Naive thymus-derived CD4-positive, alpha-beta T cell (primary cell): ENCODE measurements at regions of chr14 and their contacts with region 1.

Region 1: DNA sequence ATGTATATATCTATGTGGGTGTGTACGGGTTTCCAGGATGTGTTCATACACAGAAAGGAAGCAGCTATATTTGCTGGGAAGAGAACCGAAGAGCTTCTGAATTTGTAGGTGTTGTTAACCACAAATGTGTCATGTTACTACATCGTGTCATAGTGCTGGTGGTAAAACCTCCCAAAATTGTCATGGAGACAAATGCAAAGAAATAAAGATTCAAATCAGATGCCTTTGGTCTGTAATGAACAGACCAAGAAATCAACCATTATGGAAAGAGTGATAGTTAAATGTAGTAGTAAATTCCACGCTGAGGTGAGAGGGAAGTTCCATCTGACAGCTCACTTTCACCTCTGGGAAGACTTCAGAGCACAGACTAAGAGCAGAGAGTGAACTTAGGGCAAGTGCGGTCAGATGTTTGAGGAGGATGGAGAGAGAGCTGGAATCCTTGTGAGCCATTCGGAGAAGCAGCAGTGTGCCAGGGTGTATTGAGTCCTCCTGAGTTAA is 487.5 kb downstream of the TMEM121 start:
- DNase-seq: peak in 4 of 9 donors; percentile 40 to 60 (median 54)
- ATAC-seq: peak; percentile 88
- H3K4me3 ChIP-seq: no peak overlapping the region
- H3K4me3 Mint-ChIP-seq: peak overlapping the region in 3 of 10 donors; percentile 16 to 65 (median 20)
- H3K27ac ChIP-seq: peak overlapping the region; percentile 48
- H3K27ac Mint-ChIP-seq: peak overlapping the region; percentile 64 to 93 (median 84)
- H3K4me1 ChIP-seq: peaks cover 0 to 7% of the 10 kb centered on the region in 2 donors
- H3K4me1 Mint-ChIP-seq: peaks cover 14 to 53% (median 20%) of the 10 kb centered on the region in 7 donors
- H3K27me3 ChIP-seq: no peaks in the 10 kb centered on the region
- H3K27me3 Mint-ChIP-seq: peaks cover 0 to 2% (median 0%) of the 10 kb centered on the region in 5 donors

Region 2: DNA sequence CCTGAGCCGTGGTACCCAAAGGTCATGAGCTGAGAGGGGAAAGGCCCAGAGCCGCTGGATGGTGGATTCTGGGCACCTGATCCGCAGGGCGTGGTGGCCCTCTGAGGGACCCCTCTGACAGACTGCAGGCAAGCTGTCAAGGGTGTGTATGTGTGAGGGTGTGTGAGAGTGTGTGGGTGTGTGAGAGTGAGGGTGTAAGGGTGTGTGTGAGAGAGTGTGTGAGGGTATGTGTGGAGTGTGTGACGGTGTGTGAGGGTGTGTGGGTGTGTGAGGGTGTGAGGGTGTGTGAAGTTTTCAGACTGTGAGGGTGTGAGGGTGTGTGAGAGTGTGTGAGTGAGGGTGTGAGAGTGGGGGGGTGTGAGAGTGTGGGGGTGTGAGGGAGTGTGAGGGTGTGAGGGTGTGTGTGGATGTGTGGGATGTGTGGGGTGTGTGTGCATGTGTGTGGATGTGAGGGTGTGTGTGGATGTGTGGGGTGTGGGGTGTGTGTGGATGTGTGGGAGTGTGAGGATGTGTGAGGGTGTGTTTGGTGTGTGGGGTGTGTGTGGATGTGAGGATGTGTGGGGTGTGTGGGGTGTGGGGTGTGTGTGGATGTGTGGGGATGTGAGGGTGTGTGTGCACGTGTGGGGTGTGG is 330.9 kb before region 1 on chr14:
- CTCF ChIA-PET with region 1: no interaction called
- POLR2A ChIA-PET with region 1: no interaction called
- intact Hi-C with region 1: loop called in 1 of 2 experiments (anchors 10 kb)
- DNase-seq: no peak
- ATAC-seq: no peak
- H3K4me3 ChIP-seq: no peak overlapping the region
- H3K4me3 Mint-ChIP-seq: peak overlapping the region in 1 of 10 donors; percentile 34
- H3K27ac ChIP-seq: no peak overlapping the region
- H3K27ac Mint-ChIP-seq: peak overlapping the region in 3 of 9 donors; percentile 22 to 79 (median 63)
- H3K4me1 ChIP-seq: no peaks in the 10 kb centered on the region
- H3K4me1 Mint-ChIP-seq: peaks cover 0 to 7% (median 0%) of the 10 kb centered on the region in 7 donors
- H3K27me3 ChIP-seq: no peaks in the 10 kb centered on the region
- H3K27me3 Mint-ChIP-seq: peaks cover 0 to 3% (median 0%) of the 10 kb centered on the region in 5 donors

Region 3: DNA sequence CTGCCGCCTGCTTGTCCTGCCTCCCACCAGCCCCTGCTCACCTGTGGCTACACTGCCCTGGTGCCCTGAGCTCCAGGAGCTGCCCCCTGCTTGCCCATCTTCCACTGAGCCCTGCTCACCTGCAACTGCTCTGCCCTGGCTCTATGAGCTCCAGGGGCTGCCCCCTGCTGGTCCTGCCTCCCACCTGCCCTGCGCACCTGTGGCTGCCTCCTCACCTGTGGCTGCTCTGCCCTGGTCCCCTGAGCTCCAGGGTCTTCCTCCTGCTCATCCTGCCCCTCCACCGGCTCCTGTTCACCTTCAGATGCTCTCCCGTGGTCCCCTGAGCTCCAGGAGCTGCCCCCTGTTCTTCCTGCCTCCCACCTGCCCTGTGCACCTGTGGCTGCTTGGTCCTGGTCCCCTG is 239.9 kb before region 1 on chr14:
- CTCF ChIA-PET with region 1: no interaction called
- POLR2A ChIA-PET with region 1: no interaction called
- intact Hi-C with region 1: no loop called
- DNase-seq: no peak
- ATAC-seq: no peak
- H3K4me3 ChIP-seq: no peak overlapping the region
- H3K4me3 Mint-ChIP-seq: peak overlapping the region in 1 of 10 donors; percentile 51
- H3K27ac ChIP-seq: no peak overlapping the region
- H3K27ac Mint-ChIP-seq: no peak overlapping the region
- H3K4me1 ChIP-seq: no peaks in the 10 kb centered on the region
- H3K4me1 Mint-ChIP-seq: peaks cover 0 to 8% (median 0%) of the 10 kb centered on the region in 7 donors
- H3K27me3 ChIP-seq: no peaks in the 10 kb centered on the region
- H3K27me3 Mint-ChIP-seq: peaks cover 0 to 18% (median 7%) of the 10 kb centered on the region in 5 donors

Region 4: DNA sequence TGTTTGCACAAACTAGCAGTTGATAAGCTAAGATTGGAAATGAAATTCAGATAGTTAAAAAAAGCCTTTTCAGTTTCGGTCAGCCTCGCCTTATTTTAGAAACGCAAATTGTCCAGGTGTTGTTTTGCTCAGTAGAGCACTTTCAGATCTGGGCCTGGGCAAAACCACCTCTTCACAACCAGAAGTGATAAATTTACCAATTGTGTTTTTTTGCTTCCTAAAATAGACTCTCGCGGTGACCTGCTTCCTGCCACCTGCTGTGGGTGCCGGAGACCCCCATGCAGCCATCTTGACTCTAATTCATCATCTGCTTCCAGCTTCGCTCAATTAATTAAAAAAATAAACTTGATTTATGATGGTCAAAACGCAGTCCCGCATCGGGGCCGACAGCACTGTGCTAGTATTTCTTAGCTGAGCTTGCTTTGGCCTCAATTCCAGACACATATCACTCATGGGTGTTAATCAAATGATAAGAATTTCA is 151.9 kb before region 1 on chr14:
- CTCF ChIA-PET with region 1: no interaction called
- POLR2A ChIA-PET with region 1: no interaction called
- intact Hi-C with region 1: loop called in 1 of 2 experiments (anchors 10 kb)
- DNase-seq: peak in 1 of 9 donors; percentile 36
- ATAC-seq: no peak
- H3K4me3 ChIP-seq: no peak overlapping the region
- H3K4me3 Mint-ChIP-seq: peak overlapping the region in 2 of 10 donors; percentile 48 to 73
- H3K27ac ChIP-seq: no peak overlapping the region
- H3K27ac Mint-ChIP-seq: peak overlapping the region in 1 of 9 donors; percentile 89
- H3K4me1 ChIP-seq: peaks cover 0 to 39% of the 10 kb centered on the region in 2 donors
- H3K4me1 Mint-ChIP-seq: peaks cover 0 to 44% (median 14%) of the 10 kb centered on the region in 7 donors
- H3K27me3 ChIP-seq: no peaks in the 10 kb centered on the region
- H3K27me3 Mint-ChIP-seq: peaks cover 0 to 42% (median 39%) of the 10 kb centered on the region in 5 donors

Region 5: GRCh38 chr14:105974902-105975301 is 39.0 kb before region 1 on chr14:
- CTCF ChIA-PET with region 1: interaction called, 4 read pairs
- POLR2A ChIA-PET with region 1: no interaction called
- intact Hi-C with region 1: loop called in 1 of 2 experiments (anchors 1 kb)
- DNase-seq: peak in 8 of 9 donors; percentile 31 to 59 (median 46)
- ATAC-seq: peak; percentile 73
- H3K4me3 ChIP-seq: no peak overlapping the region
- H3K4me3 Mint-ChIP-seq: peak overlapping the region in 1 of 10 donors; percentile 21
- H3K27ac ChIP-seq: no peak overlapping the region
- H3K27ac Mint-ChIP-seq: peak overlapping the region in 4 of 9 donors; percentile 12 to 76 (median 44)
- H3K4me1 ChIP-seq: peaks cover 10 to 11% of the 10 kb centered on the region in 2 donors
- H3K4me1 Mint-ChIP-seq: peaks cover 0 to 11% (median 8%) of the 10 kb centered on the region in 7 donors
- H3K27me3 ChIP-seq: peaks cover 0 to 10% of the 10 kb centered on the region in 2 donors
- H3K27me3 Mint-ChIP-seq: peaks cover 0 to 8% (median 0%) of the 10 kb centered on the region in 5 donors

Region 6: GRCh38 chr14:106029959-106030358 is 16.0 kb after region 1 on chr14:
- CTCF ChIA-PET with region 1: interaction called, 4 read pairs
- POLR2A ChIA-PET with region 1: interaction called, 3 read pairs
- intact Hi-C with region 1: loop called in 1 of 2 experiments (anchors 1 kb)
- DNase-seq: no peak
- ATAC-seq: no peak
- H3K4me3 ChIP-seq: no peak overlapping the region
- H3K4me3 Mint-ChIP-seq: no peak overlapping the region
- H3K27ac ChIP-seq: no peak overlapping the region
- H3K27ac Mint-ChIP-seq: no peak overlapping the region
- H3K4me1 ChIP-seq: peaks cover 0 to 9% of the 10 kb centered on the region in 2 donors
- H3K4me1 Mint-ChIP-seq: peaks cover 0 to 17% (median 8%) of the 10 kb centered on the region in 7 donors
- H3K27me3 ChIP-seq: no peaks in the 10 kb centered on the region
- H3K27me3 Mint-ChIP-seq: peaks cover 0 to 3% (median 0%) of the 10 kb centered on the region in 5 donors

Region 7: GRCh38 chr14:106044949-106045600 is 31.1 kb after region 1 on chr14:
- CTCF ChIA-PET with region 1: no interaction called
- POLR2A ChIA-PET with region 1: no interaction called
- intact Hi-C with region 1: loop called in 1 of 2 experiments (anchors 1 kb)
- DNase-seq: peak; percentile 56 to 78 (median 74)
- ATAC-seq: peak; percentile 98
- H3K4me3 ChIP-seq: no peak overlapping the region
- H3K4me3 Mint-ChIP-seq: no peak overlapping the region
- H3K27ac ChIP-seq: no peak overlapping the region
- H3K27ac Mint-ChIP-seq: peak overlapping the region in 1 of 9 donors; percentile 76
- H3K4me1 ChIP-seq: no peaks in the 10 kb centered on the region
- H3K4me1 Mint-ChIP-seq: peaks cover 0 to 6% (median 0%) of the 10 kb centered on the region in 7 donors
- H3K27me3 ChIP-seq: no peaks in the 10 kb centered on the region
- H3K27me3 Mint-ChIP-seq: peaks cover 0 to 8% (median 0%) of the 10 kb centered on the region in 5 donors

Region 8: GRCh38 chr14:106491851-106492250 is 477.9 kb after region 1 on chr14:
- CTCF ChIA-PET with region 1: no interaction called
- POLR2A ChIA-PET with region 1: no interaction called
- intact Hi-C with region 1: no loop called
- DNase-seq: no peak
- ATAC-seq: no peak
- H3K4me3 ChIP-seq: no peak overlapping the region
- H3K4me3 Mint-ChIP-seq: no peak overlapping the region
- H3K27ac ChIP-seq: no peak overlapping the region
- H3K27ac Mint-ChIP-seq: no peak overlapping the region
- H3K4me1 ChIP-seq: no peaks in the 10 kb centered on the region
- H3K4me1 Mint-ChIP-seq: peaks cover 6 to 26% (median 15%) of the 10 kb centered on the region in 7 donors
- H3K27me3 ChIP-seq: no peaks in the 10 kb centered on the region
- H3K27me3 Mint-ChIP-seq: peaks cover 0 to 7% (median 0%) of the 10 kb centered on the region in 5 donors